Activated T-helper 2 cell treated with anti-CD3 and anti-CD28 coated beads, Interferon-gamma antibody, Interleukin-2, Interleukin-4, amounts not matched to agents 10 μg/mL and 5 μg/mL and 100 μg/mL, durations not matched to agents 14 hours and 24 hours and 36 hours (primary cell): ENCODE measurements at regions of chr22 and their contacts with region 1.

Region 1: GRCh38 chr22:25362215-25362882 is 142.9 kb downstream of the CRYBB2 start:
- DNase-seq: peak; percentile 55
- H3K4me3 Mint-ChIP-seq: no peak overlapping the region
- H3K27ac Mint-ChIP-seq: peak overlapping the region; percentile 8
- H3K4me1 Mint-ChIP-seq: peaks cover 5% of the 10 kb centered on the region
- H3K27me3 Mint-ChIP-seq: no peaks in the 10 kb centered on the region

Region 2: GRCh38 chr22:25399649-25400151 is 37.4 kb after region 1 on chr22:
- intact Hi-C with region 1: loop called (anchors 2 kb)
- DNase-seq: no peak
- H3K4me3 Mint-ChIP-seq: no peak overlapping the region
- H3K27ac Mint-ChIP-seq: no peak overlapping the region
- H3K4me1 Mint-ChIP-seq: peaks cover 60% of the 10 kb centered on the region
- H3K27me3 Mint-ChIP-seq: no peaks in the 10 kb centered on the region